Tibial artery (tissue), 4 donors: ENCODE measurements at regions of chr9 and their contacts with region 1.

Region 1: GRCh38 chr9:88534456-88535261 is at the start of gene NXNL2:
- DNase-seq: peak; percentile 77 to 93
- H3K4me3 ChIP-seq: peak within 1 kb of the TSS; percentile 69 to 75
- H3K27ac ChIP-seq: peak within 1 kb of the TSS; percentile 91 to 94
- H3K4me1 ChIP-seq: peaks cover 0 to 51% (median 41%) of the 10 kb centered on the region in 4 donors
- H3K27me3 ChIP-seq: no peaks in the 10 kb centered on the region
- CTCF ChIP-seq: no peak

Region 2: DNA sequence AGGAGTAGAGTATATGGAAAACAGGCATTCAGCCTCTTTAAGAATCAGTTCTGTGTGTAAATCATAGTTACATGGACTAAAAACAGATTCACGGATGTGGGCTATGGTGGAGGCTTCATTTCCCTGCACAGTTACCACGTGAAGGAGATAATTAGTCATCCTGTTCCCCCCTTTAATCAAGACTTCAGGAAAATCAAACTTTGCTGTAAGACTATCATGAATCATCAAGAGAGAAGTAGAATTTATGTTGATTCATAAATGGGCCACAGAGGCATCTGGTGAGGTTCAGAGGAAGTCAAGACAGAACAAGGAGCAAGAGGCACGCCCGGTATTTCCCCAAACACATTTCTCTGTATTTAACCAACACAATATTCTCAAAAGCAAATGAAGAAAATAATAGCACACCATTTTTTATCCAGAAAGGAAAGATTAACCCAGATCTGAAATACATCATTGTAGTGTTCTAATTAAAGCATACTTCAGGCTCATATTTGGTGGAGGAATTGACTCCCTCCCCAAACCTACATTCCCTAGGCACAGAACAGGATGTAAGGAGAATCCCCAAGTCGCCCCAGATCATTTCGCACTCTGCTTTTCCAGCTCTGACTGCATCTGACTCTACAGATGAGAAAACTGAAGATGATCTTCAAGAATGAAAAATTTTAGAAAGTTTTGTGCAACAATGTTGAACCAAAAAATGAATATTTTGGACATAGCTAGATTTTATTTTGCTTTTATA is 1411.5 kb before region 1 on chr9:
- intact Hi-C with region 1: no loop called
- DNase-seq: no peak
- H3K4me3 ChIP-seq: no peak overlapping the region
- H3K27ac ChIP-seq: peak overlapping the region; percentile 22 to 42
- H3K4me1 ChIP-seq: peaks cover 0 to 53% (median 23%) of the 10 kb centered on the region in 4 donors
- H3K27me3 ChIP-seq: no peaks in the 10 kb centered on the region
- CTCF ChIP-seq: no peak

Region 3: DNA sequence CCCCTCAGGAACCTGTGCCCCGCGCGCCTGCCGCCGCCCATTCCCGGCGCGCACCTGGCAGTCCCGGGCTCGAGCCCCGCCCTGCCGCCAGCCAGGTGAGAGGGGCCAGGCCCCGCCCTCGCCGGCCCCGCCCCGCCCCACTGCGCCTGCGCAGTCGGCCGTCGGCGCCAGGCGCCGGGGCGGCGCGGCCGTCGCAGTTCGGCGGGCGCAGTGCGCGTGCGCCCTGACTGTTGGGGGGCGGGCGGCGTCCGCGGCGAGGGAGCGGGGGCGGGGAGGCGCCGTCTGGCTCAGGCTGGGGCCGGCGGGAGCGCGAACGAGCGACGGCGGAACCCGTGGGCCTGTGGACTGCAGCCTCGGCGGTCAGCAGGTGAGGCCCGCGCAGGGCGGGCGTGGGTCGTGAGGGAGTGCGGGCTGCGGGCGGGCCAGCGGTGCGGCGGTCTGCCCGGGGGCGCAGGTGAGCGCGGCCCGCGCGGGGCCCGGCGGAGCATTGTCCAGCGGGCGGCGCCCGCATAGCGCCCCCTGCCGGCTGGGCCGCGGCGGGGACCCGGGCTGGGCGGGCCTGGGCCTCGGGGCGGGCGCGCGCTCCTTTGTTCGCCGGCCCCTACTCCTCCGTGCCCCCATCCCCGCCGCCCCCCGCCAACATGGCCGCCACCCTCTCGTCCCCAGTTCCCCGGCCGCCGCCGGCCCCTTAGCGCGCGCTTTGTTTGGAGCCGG is 146.3 kb before region 1 on chr9 and contains the start of gene SPIN1:
- intact Hi-C with region 1: loop called (anchors 2 kb)
- DNase-seq: peak; percentile 57 to 88
- H3K4me3 ChIP-seq: peak within 1 kb of the TSS; percentile 84 to 96
- H3K27ac ChIP-seq: peak within 1 kb of the TSS; percentile 90 to 96
- H3K4me1 ChIP-seq: peaks cover 0 to 38% (median 23%) of the 10 kb centered on the region in 4 donors
- H3K27me3 ChIP-seq: no peaks in the 10 kb centered on the region
- CTCF ChIP-seq: peak; percentile 25 to 76

Region 4: DNA sequence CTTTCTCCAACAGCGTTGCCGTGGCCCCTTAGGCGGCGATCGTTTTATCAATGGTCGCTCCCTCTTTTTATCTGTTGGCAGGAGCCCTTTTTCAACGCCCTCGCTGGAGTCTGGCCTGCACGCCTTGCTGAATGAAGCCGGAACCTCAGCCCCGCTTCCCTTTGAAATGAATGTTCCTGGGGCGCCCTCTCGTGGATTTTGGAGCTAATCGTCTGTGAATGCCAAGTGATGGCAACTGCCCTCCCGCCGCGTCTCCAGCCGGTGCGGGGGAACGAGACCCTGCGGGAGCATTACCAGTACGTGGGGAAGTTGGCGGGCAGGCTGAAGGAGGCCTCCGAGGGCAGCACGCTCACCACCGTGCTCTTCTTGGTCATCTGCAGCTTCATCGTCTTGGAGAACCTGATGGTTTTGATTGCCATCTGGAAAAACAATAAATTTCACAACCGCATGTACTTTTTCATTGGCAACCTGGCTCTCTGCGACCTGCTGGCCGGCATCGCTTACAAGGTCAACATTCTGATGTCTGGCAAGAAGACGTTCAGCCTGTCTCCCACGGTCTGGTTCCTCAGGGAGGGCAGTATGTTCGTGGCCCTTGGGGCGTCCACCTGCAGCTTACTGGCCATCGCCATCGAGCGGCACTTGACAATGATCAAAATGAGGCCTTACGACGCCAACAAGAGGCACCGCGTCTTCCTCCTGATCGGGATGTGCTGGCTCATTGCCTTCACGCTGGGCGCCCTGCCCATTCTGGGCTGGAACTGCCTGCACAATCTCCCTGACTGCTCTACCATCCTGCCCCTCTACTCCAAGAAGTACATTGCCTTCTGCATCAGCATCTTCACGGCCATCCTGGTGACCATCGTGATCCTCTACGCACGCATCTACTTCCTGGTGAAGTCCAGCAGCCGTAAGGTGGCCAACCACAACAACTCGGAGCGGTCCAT is 466.6 kb after region 1 on chr9:
- intact Hi-C with region 1: loop called (anchors 10 kb)
- DNase-seq: peak; percentile 91 to 94
- H3K4me3 ChIP-seq: no peak overlapping the region
- H3K27ac ChIP-seq: peak overlapping the region; percentile 75 to 92
- H3K4me1 ChIP-seq: peaks cover 8 to 55% (median 49%) of the 10 kb centered on the region in 4 donors
- H3K27me3 ChIP-seq: no peaks in the 10 kb centered on the region
- CTCF ChIP-seq: peak; percentile 75 to 86